ENCODE measurements at regions of chr10 and their contacts with region 1.

Region 1: GRCh38 chr10:112446855-112447711 is at the starts of genes VTI1A and ZDHHC6:
- DNase-seq: peak; percentile 58
- ATAC-seq: peak; percentile 99
- H3K4me3 ChIP-seq: peak within 1 kb of the TSS; percentile 99
- H3K27ac ChIP-seq: peak within 1 kb of the TSS; percentile 99
- H3K4me1 ChIP-seq: peaks cover 22% of the 10 kb centered on the region
- H3K27me3 ChIP-seq: no peaks in the 10 kb centered on the region
- CTCF ChIP-seq: peak; percentile 33
- total RNA-seq, gene VTI1A: 36.3 TPM
- total RNA-seq, gene ZDHHC6: 40.3 TPM

Region 2: GRCh38 chr10:111875725-111876124 is 571.4 kb before region 1 on chr10:
- CTCF ChIA-PET with region 1: no interaction called
- POLR2A ChIA-PET with region 1: no interaction called
- in situ Hi-C with region 1: no loop called
- intact Hi-C with region 1: no loop called
- DNase-seq: no peak
- ATAC-seq: no peak
- H3K4me3 ChIP-seq: no peak overlapping the region
- H3K27ac ChIP-seq: no peak overlapping the region
- H3K4me1 ChIP-seq: no peaks in the 10 kb centered on the region
- H3K27me3 ChIP-seq: no peaks in the 10 kb centered on the region
- CTCF ChIP-seq: no peak

Region 3: GRCh38 chr10:112471878-112472487 is 24.9 kb after region 1 on chr10:
- CTCF ChIA-PET with region 1: interaction called, 11 read pairs
- POLR2A ChIA-PET with region 1: no interaction called
- in situ Hi-C with region 1: no loop called
- intact Hi-C with region 1: no loop called
- DNase-seq: peak; percentile 50
- ATAC-seq: peak; percentile 87
- H3K4me3 ChIP-seq: no peak overlapping the region
- H3K27ac ChIP-seq: no peak overlapping the region
- H3K4me1 ChIP-seq: 0 out of 2 replicates have a peak, but pooled peaks cover 5% of the 10 kb centered on the region
- H3K27me3 ChIP-seq: no peaks in the 10 kb centered on the region
- CTCF ChIP-seq: peak; percentile 85

Region 4: GRCh38 chr10:112991888-112992581 is 545.0 kb after region 1 on chr10:
- CTCF ChIA-PET with region 1: no interaction called
- POLR2A ChIA-PET with region 1: no interaction called
- in situ Hi-C with region 1: no loop called
- intact Hi-C with region 1: no loop called
- DNase-seq: no peak
- ATAC-seq: peak; percentile 30; the same call in 1 of the 2 replicates
- H3K4me3 ChIP-seq: no peak overlapping the region
- H3K27ac ChIP-seq: peak overlapping the region; percentile 59; the same call in 1 of the 2 replicates
- H3K4me1 ChIP-seq: peaks cover 54% of the 10 kb centered on the region
- H3K27me3 ChIP-seq: no peaks in the 10 kb centered on the region
- CTCF ChIP-seq: no peak

Measured in Panc1 (cell line).